ENCODE measurements at regions of chr1 and their contacts with region 1.

Region 1: GRCh38 chr1:8015036-8015808 is 10.9 kb downstream of the ERRFI1 start:
- DNase-seq: peak; percentile 26
- ATAC-seq: peak; percentile 91
- H3K4me3 ChIP-seq: no peak overlapping the region
- H3K27ac ChIP-seq: no peak overlapping the region
- H3K4me1 ChIP-seq: no peaks in the 10 kb centered on the region
- H3K27me3 ChIP-seq: no peaks in the 10 kb centered on the region
- CTCF ChIP-seq: peak; percentile 58 to 78 (median 64)
- EP300 ChIP-seq: no peak
- POLR2A ChIP-seq: no peak
- RAD21 ChIP-seq: peak; percentile 76

Region 2: GRCh38 chr1:7885513-7886404 is 129.5 kb before region 1 on chr1:
- CTCF ChIA-PET with region 1: no interaction called
- POLR2A ChIA-PET with region 1: no interaction called
- RAD21 ChIA-PET with region 1: no interaction called
- SMC1A ChIA-PET with region 1: no interaction called
- in situ Hi-C with region 1: no loop called
- intact Hi-C with region 1: no loop called
- DNase-seq: no peak
- ATAC-seq: peak; percentile 64
- H3K4me3 ChIP-seq: no peak overlapping the region
- H3K27ac ChIP-seq: no peak overlapping the region
- H3K4me1 ChIP-seq: no peaks in the 10 kb centered on the region
- H3K27me3 ChIP-seq: no peaks in the 10 kb centered on the region
- CTCF ChIP-seq: no peak
- EP300 ChIP-seq: no peak
- POLR2A ChIP-seq: no peak
- RAD21 ChIP-seq: no peak

Region 3: DNA sequence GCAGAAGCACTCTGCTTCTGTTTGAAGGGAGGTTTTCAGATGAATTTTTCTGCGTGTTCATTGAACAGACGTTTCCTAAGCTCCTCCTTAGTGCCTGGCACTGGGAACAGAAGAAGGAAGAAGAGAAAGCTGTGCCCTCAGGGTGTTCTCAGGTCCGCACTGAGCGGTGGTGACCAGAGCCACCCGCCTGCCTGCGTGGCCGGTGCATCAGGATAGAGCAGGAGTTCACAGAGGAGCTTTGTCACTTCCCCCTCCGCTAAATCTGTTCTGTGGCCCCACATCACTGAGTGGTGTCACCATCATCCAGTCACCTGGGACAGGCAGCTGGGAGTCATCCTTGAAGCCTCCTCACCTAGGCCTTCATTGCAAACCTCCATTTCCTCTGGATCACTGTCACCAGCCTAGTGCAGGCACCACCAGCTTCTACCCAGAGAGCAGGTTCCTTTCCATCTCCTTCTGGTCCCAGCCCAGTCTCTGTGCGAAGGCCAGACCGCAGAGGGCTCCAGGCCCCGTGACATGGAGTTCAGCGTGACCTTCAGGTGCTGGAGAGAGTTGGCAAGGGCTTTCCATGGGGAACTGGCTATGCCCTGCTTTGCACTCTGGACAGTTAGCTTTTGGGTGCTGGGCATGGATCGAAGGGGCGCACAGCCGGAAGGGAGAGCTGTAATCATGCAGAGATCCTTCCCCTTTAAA is 32.0 kb before region 1 on chr1:
- CTCF ChIA-PET with region 1: interaction called, 263 read pairs
- POLR2A ChIA-PET with region 1: interaction called, 3 read pairs
- RAD21 ChIA-PET with region 1: interaction called, 15 read pairs
- SMC1A ChIA-PET with region 1: interaction called, 79 read pairs
- in situ Hi-C with region 1: no loop called
- intact Hi-C with region 1: loop called (anchors 5 kb)
- DNase-seq: no peak
- ATAC-seq: no peak
- H3K4me3 ChIP-seq: no peak overlapping the region
- H3K27ac ChIP-seq: no peak overlapping the region
- H3K4me1 ChIP-seq: peaks cover 4% of the 10 kb centered on the region; the same call in 1 of the 2 replicates
- H3K27me3 ChIP-seq: no peaks in the 10 kb centered on the region
- CTCF ChIP-seq: no peak
- EP300 ChIP-seq: no peak
- POLR2A ChIP-seq: no peak
- RAD21 ChIP-seq: no peak

Region 4: DNA sequence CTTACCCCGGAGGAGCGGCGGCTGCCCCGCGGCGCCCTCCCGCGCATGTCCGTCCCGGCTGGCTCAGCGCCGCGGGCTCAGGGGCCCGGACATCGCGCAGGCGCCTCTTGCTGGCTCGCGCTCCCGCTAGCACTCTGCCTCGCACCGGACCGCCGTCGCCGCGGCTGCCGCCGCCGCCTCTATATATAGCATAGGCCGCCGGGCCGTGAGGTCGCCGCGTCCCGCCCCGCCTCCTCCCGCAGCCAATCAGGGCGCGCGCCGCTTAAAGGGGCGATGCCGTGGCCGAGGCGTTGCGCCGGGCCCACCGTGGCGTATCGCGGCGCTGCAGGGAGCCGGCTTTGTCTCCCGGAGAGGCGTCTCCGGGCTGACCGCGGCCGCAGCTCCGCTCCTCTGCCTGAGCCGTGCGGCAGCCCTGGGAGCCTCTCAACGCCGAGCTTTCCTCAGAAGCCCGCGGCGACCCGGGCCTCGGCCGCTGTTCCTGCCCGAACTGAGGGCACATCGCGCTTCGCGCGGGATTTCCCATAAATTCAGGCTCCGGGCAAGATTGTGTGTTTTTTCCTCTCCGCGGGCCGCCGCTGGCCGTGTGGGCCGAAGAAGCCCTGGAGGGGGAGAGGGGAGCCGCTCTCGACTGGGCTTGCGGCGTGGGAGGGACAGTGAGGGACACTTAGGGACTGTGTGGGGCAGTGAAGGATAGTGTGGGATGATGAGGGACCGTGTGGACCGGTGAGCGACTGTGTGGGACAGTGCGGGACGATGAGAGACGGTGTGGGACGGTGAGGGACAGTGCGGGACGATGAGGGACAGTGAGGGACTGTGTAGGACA is 11.1 kb after region 1 on chr1 and contains the start of gene ERRFI1:
- CTCF ChIA-PET with region 1: interaction called, 25 read pairs
- POLR2A ChIA-PET with region 1: no interaction called
- RAD21 ChIA-PET with region 1: interaction called, 5 read pairs
- SMC1A ChIA-PET with region 1: interaction called, 11 read pairs
- in situ Hi-C with region 1: no loop called
- intact Hi-C with region 1: no loop called
- DNase-seq: peak; percentile 28
- ATAC-seq: peak; percentile 97
- H3K4me3 ChIP-seq: peak within 1 kb of the TSS; percentile 75
- H3K27ac ChIP-seq: no peak within 1 kb of the TSS
- H3K4me1 ChIP-seq: peaks cover 5% of the 10 kb centered on the region
- H3K27me3 ChIP-seq: peaks cover 0 to 4% of the 10 kb centered on the region in 2 experiments; a peak in 1 of 4 replicates
- CTCF ChIP-seq: no peak
- EP300 ChIP-seq: no peak
- POLR2A ChIP-seq: peak; percentile 93
- RAD21 ChIP-seq: no peak
- polyA plus RNA-seq, gene ERRFI1: 1.6 to 2.4 TPM

Region 5: DNA sequence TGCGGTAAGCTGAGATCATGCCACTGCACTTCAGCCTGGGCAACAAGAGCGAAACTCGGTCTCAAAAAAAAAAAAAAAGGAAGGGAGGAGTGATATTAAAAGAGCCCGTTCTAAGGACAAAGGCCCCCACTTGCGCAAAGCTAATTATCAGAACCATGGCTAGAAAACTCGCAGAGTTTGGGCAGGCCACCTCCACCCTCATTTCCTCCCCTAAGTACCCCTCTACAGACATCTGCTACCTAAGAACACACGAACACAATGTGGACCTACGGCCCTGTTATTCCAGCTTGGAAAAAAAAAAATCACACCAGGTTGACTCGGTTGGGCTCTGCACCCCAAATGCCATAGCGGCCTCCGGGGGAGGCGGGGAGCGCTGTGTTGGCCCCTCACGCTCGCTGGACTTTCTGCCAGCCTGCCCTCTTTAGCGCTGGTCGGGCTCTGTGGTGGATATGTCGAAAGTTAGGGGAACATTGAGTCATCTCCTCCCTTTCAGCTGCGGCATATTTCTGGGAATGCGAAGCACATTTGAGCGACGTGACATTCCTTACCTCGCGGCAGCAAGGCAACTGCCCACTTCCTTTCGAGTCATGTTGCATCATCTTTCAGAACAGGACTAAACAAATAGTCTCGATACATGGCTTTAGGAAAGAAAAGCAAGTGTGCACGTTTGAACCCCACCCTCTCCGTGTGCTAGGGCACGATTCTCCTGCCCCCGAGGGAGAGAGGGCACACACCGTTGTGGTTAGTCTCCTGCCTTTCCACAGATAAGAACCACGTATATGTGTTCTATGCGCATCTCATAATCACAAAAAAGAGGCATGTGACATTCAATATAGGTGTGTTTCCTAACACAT is 196.6 kb after region 1 on chr1:
- CTCF ChIA-PET with region 1: no interaction called
- POLR2A ChIA-PET with region 1: no interaction called
- RAD21 ChIA-PET with region 1: no interaction called
- SMC1A ChIA-PET with region 1: no interaction called
- in situ Hi-C with region 1: no loop called
- intact Hi-C with region 1: no loop called
- DNase-seq: no peak
- ATAC-seq: no peak
- H3K4me3 ChIP-seq: no peak overlapping the region
- H3K27ac ChIP-seq: no peak overlapping the region
- H3K4me1 ChIP-seq: no peaks in the 10 kb centered on the region
- H3K27me3 ChIP-seq: no peaks in the 10 kb centered on the region; a peak in 1 of 4 replicates
- CTCF ChIP-seq: no peak
- EP300 ChIP-seq: no peak
- POLR2A ChIP-seq: no peak
- RAD21 ChIP-seq: no peak

Region 6: DNA sequence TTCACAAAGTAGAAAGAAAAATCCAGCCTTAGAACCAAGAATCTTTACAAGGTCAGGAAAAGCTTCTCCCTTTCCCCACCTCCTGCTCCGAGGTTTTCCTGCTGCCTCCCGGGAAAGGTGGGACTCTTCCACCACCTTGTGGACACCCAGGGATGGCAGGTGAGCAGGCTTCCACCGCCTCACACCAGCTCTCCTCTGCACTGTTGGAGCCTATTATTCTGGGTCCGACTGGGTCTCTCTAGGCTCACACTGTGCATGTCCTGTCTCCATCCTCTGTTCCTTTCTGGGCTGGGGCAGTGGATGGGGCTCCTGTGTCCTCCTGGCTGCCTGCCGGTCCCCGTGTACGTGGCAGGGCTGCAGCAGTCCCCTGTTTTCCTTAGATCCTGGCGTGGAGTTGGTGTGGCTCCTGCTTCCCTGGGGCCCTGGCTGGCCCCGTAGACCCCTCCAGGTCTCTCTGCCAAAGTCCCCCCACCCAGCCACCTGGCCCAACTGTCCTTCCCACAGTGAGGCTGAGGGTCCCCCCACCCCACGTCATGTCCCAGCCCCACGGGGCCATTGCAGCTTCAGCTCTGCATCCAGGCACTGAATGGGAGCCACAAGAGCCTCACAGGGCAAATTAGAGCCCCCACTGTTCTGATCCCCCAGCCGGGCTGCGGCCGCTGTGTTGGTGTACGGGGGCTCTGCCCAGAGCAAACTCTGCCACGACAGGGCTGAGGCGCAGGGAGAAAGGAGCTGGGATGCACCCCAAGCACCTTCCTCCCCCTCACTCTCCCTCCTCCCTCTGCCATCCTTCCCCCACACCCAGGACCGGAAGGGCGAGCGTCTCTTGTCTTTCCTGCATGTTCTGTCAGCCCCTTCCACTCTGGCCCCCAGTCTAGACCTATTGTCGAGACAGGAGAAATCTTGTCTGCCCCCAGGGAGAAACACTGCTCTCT is 299.4 kb after region 1 on chr1:
- CTCF ChIA-PET with region 1: interaction called, 161 read pairs
- POLR2A ChIA-PET with region 1: no interaction called
- RAD21 ChIA-PET with region 1: interaction called, 96 read pairs
- SMC1A ChIA-PET with region 1: interaction called, 47 read pairs
- in situ Hi-C with region 1: loop called (anchors 5 kb)
- intact Hi-C with region 1: loop called (anchors 1 kb)
- DNase-seq: peak; percentile 11
- ATAC-seq: peak; percentile 88
- H3K4me3 ChIP-seq: no peak overlapping the region
- H3K27ac ChIP-seq: no peak overlapping the region
- H3K4me1 ChIP-seq: no peaks in the 10 kb centered on the region
- H3K27me3 ChIP-seq: peaks cover 0 to 4% of the 10 kb centered on the region in 2 experiments; a peak in 1 of 4 replicates
- CTCF ChIP-seq: peak; percentile 80 to 94 (median 89)
- EP300 ChIP-seq: no peak
- POLR2A ChIP-seq: no peak
- RAD21 ChIP-seq: peak; percentile 98

Measured in GM12878 (cell line).